ENCODE measurements at regions of chr1 and their contacts with region 1.

Region 1: GRCh38 chr1:193338194-193338593 is 151.8 kb upstream of the B3GALT2 start:
- DNase-seq: peak; percentile 46
- H3K4me3 ChIP-seq: no peak overlapping the region
- H3K27ac ChIP-seq: no peak overlapping the region
- H3K4me1 ChIP-seq: no peaks in the 10 kb centered on the region
- H3K27me3 ChIP-seq: no peaks in the 10 kb centered on the region
- CTCF ChIP-seq: peak; percentile 16 to 38

Region 2: DNA sequence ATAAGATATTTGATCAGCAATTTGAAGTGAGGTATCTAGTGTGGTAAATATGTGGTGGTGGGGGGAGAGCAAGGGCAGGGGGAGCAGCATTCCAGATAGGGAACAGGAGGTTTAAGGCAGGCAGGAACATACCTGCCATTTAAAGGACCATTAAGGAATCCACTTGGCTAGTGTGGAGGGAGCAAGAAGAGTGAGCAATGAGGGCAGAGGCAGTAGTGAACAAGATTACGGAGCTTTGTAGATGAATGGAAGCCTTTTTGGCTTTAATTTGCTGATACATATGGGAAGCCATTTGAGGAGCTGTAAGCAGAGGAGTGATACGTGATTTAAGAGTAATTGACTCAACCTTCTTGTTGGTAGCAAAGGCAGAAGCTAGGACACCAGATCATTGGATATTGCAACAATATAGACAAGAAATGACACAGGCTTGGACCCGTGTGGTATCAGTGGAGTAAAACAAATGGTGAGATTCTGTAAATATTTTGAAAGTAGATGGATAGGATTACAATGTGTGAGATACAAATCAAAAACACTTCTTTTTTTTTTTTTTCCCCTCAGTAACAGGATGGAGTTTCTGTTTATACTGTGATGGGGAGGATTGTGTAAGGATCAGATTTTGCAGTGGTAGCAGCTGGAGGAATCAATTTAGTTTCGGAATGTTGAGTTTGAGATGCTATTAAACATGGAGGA is 78.0 kb before region 1 on chr1:
- CTCF ChIA-PET with region 1: no interaction called
- dilution Hi-C with region 1: no loop called
- in situ Hi-C with region 1: no loop called
- intact Hi-C with region 1: loop called (anchors 2 kb)
- DNase-seq: no peak
- H3K4me3 ChIP-seq: no peak overlapping the region
- H3K27ac ChIP-seq: no peak overlapping the region
- H3K4me1 ChIP-seq: no peaks in the 10 kb centered on the region
- H3K27me3 ChIP-seq: no peaks in the 10 kb centered on the region
- CTCF ChIP-seq: no peak

Region 3: GRCh38 chr1:193293726-193294125 is 44.5 kb before region 1 on chr1:
- CTCF ChIA-PET with region 1: no interaction called
- dilution Hi-C with region 1: no loop called
- in situ Hi-C with region 1: no loop called
- intact Hi-C with region 1: no loop called
- DNase-seq: no peak
- H3K4me3 ChIP-seq: no peak overlapping the region
- H3K27ac ChIP-seq: no peak overlapping the region
- H3K4me1 ChIP-seq: no peaks in the 10 kb centered on the region
- H3K27me3 ChIP-seq: no peaks in the 10 kb centered on the region
- CTCF ChIP-seq: no peak

Region 4: DNA sequence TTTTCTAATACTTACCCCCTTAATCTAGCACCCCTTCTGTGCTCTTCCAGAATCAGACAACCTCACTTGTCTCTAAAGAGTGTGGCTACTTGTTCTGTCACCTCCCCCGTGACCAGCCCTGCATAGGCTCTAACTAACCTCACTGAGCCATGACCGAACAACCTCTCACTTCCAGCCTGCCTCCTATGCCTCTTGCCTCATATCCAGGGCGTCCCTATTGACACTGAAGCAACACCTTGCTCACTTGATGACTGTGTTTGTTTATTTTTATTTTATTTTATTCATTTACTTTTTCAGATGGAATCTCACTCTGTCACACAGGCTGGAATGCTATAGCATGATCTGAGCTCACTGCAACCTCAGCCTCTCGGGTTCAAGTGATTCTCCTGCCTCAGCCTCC is 83.3 kb after region 1 on chr1:
- CTCF ChIA-PET with region 1: no interaction called
- dilution Hi-C with region 1: no loop called
- in situ Hi-C with region 1: no loop called
- intact Hi-C with region 1: no loop called
- DNase-seq: no peak
- H3K4me3 ChIP-seq: no peak overlapping the region
- H3K27ac ChIP-seq: no peak overlapping the region
- H3K4me1 ChIP-seq: no peaks in the 10 kb centered on the region
- H3K27me3 ChIP-seq: no peaks in the 10 kb centered on the region
- CTCF ChIP-seq: no peak

Region 5: DNA sequence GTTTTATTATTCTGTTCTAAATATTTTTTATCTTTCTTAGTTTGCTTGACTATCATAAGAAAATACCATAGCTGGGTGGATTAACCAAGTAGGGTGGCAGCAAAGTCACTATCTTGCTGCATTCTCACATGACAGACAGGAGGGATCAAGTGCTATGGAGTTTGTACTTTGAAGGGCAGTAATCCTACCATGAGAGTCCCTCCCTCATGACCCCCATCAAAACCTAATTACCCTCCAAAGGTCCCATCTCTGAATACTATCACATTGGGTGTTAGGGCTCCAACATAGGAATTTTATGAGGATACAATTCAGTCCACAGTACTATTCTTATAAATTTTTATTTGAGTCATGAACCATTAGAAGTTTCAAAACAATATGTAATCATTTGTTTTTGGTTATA is 236.7 kb after region 1 on chr1:
- CTCF ChIA-PET with region 1: no interaction called
- dilution Hi-C with region 1: no loop called
- in situ Hi-C with region 1: no loop called
- intact Hi-C with region 1: no loop called
- DNase-seq: no peak
- H3K4me3 ChIP-seq: no peak overlapping the region
- H3K27ac ChIP-seq: no peak overlapping the region
- H3K4me1 ChIP-seq: no peaks in the 10 kb centered on the region
- H3K27me3 ChIP-seq: no peaks in the 10 kb centered on the region
- CTCF ChIP-seq: no peak

Measured in mammary epithelial cell (primary cell).